Endothelial cell of umbilical vein (primary cell): ENCODE measurements at regions of chrX and their contacts with region 1.

Region 1: DNA sequence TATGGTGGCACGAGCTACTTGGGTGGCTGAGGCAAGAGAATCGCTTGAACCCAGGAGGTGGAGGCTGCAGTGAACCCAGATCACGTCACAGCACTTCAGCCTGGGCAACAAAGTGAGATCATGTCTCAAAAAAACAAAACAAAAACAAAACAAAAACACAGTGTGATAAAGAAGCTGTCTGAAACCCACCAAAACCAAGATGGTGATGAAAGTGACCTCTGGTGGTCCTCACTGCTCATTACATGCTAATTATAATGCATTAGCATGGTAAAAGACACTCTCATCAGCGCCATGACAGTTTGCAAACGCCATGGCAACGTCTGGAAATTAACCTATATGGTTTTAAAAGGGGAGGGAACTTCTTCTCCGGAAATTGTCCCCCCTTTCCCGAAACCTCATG is 29.4 kb upstream of the OPHN1 start:
- DNase-seq: peak; percentile 64
- H3K4me3 ChIP-seq: no peak overlapping the region
- H3K27ac ChIP-seq: peak overlapping the region; percentile 57
- H3K4me1 ChIP-seq: no peaks in the 10 kb centered on the region
- H3K27me3 ChIP-seq: no peaks in the 10 kb centered on the region
- CTCF ChIP-seq: peak in 1 of 2 donors; percentile 46
- POLR2A ChIP-seq: no peak

Region 2: GRCh38 chrX:68238568-68238967 is 224.1 kb before region 1 on chrX:
- CTCF ChIA-PET with region 1: no interaction called
- POLR2A ChIA-PET with region 1: no interaction called
- dilution Hi-C with region 1: no loop called
- intact Hi-C with region 1: loop called (anchors 5 kb)
- DNase-seq: no peak
- H3K4me3 ChIP-seq: no peak overlapping the region
- H3K27ac ChIP-seq: no peak overlapping the region
- H3K4me1 ChIP-seq: no peaks in the 10 kb centered on the region
- H3K27me3 ChIP-seq: no peaks in the 10 kb centered on the region
- CTCF ChIP-seq: peak; percentile 25 to 42
- POLR2A ChIP-seq: no peak

Region 3: DNA sequence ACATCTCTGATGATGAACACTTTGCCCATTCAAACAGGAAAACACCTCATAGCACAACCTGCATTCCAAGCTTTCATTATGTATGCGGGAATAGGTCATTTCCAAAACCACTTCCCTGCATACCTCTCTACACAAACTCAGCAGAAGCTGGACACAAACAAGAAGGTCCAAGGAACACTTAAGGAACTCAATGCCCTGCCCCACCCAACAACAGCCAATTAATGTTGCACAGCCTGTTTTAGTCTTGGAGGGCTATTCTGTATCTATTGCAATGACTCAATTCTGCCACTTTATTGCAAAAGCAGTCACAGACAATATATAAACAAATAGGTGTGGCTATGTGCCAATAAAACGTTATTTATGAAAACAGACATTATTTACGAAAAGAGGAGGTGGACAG is 46.1 kb before region 1 on chrX:
- CTCF ChIA-PET with region 1: no interaction called
- POLR2A ChIA-PET with region 1: no interaction called
- dilution Hi-C with region 1: no loop called
- intact Hi-C with region 1: loop called (anchors 2 kb)
- DNase-seq: peak; percentile 11
- H3K4me3 ChIP-seq: no peak overlapping the region
- H3K27ac ChIP-seq: no peak overlapping the region
- H3K4me1 ChIP-seq: peaks cover 7% of the 10 kb centered on the region
- H3K27me3 ChIP-seq: no peaks in the 10 kb centered on the region
- CTCF ChIP-seq: no peak
- POLR2A ChIP-seq: no peak

Region 4: GRCh38 chrX:68433155-68433980 is 29.3 kb before region 1 on chrX and contains the start of gene OPHN1:
- CTCF ChIA-PET with region 1: interaction called, 9 read pairs
- POLR2A ChIA-PET with region 1: no interaction called
- dilution Hi-C with region 1: no loop called
- intact Hi-C with region 1: loop called (anchors 1 kb)
- DNase-seq: peak; percentile 72
- H3K4me3 ChIP-seq: peak within 1 kb of the TSS; percentile 44 to 62 (median 59)
- H3K27ac ChIP-seq: peak within 1 kb of the TSS; percentile 64
- H3K4me1 ChIP-seq: peaks cover 9% of the 10 kb centered on the region
- H3K27me3 ChIP-seq: no peaks in the 10 kb centered on the region
- CTCF ChIP-seq: no peak
- POLR2A ChIP-seq: peak; percentile 37
- total RNA-seq, gene OPHN1: 6.2 and 6.7 TPM in 2 replicates